MCF 10A (cell line): ENCODE measurements at regions of chr18 and their contacts with region 1.

Region 1: GRCh38 chr18:55234366-55235093 is 275.3 kb upstream of the CCDC68 start:
- DNase-seq: peak; percentile 82
- H3K4me3 Mint-ChIP-seq: peak overlapping the region; percentile 59
- H3K27ac Mint-ChIP-seq: no peak overlapping the region
- H3K4me1 Mint-ChIP-seq: peaks cover 5% of the 10 kb centered on the region
- H3K27me3 Mint-ChIP-seq: no peaks in the 10 kb centered on the region
- CTCF ChIP-seq: peak; percentile 78

Region 2: GRCh38 chr18:54616220-54616848 is 618.2 kb before region 1 on chr18:
- CTCF ChIA-PET with region 1: no interaction called
- POLR2A ChIA-PET with region 1: no interaction called
- intact Hi-C with region 1: no loop called
- DNase-seq: no peak
- H3K4me3 Mint-ChIP-seq: no peak overlapping the region
- H3K27ac Mint-ChIP-seq: no peak overlapping the region
- H3K4me1 Mint-ChIP-seq: peaks cover 11% of the 10 kb centered on the region
- H3K27me3 Mint-ChIP-seq: no peaks in the 10 kb centered on the region
- CTCF ChIP-seq: no peak

Region 3: GRCh38 chr18:55219059-55219458 is 15.5 kb before region 1 on chr18:
- CTCF ChIA-PET with region 1: interaction called, 19 read pairs
- POLR2A ChIA-PET with region 1: no interaction called
- intact Hi-C with region 1: no loop called
- DNase-seq: no peak
- H3K4me3 Mint-ChIP-seq: no peak overlapping the region
- H3K27ac Mint-ChIP-seq: no peak overlapping the region
- H3K4me1 Mint-ChIP-seq: no peaks in the 10 kb centered on the region
- H3K27me3 Mint-ChIP-seq: no peaks in the 10 kb centered on the region
- CTCF ChIP-seq: no peak

Region 4: GRCh38 chr18:55249550-55249949 is 15.0 kb after region 1 on chr18:
- CTCF ChIA-PET with region 1: interaction called, 40 read pairs
- POLR2A ChIA-PET with region 1: no interaction called
- intact Hi-C with region 1: no loop called
- DNase-seq: no peak
- H3K4me3 Mint-ChIP-seq: no peak overlapping the region
- H3K27ac Mint-ChIP-seq: no peak overlapping the region
- H3K4me1 Mint-ChIP-seq: peaks cover 6% of the 10 kb centered on the region
- H3K27me3 Mint-ChIP-seq: no peaks in the 10 kb centered on the region
- CTCF ChIP-seq: no peak

Region 5: DNA sequence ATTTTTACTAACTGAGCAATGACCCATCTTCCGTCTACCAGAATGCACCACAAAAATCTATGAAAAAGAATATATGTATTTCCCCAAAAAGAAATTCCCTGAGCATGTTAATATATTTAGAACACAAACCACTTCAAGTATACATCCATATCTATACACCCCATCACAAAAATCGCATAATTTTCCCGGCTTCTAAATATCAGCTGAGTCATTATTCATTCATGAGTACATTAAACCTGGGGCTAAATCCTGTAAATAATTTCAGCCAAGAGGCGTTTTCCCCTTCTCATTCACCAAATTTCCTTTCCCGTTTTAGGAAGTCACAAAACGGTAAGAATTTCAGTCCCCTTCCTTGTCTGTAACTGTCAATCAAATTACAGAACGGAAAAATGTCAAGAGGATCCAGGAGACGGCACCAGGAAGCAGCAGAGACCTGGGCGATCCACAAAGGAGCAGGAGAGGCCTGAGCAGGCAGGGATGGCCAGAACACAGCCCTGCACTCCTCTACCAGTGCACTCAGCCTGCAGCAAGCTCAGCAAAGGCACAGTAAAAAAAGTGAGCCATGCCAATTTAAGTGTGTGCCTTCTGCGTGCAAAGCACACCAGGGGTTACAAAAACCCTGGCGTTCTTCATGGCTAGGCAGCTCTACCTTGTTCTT is 52.7 kb after region 1 on chr18:
- CTCF ChIA-PET with region 1: interaction called, 13 read pairs
- POLR2A ChIA-PET with region 1: no interaction called
- intact Hi-C with region 1: no loop called
- DNase-seq: no peak
- H3K4me3 Mint-ChIP-seq: no peak overlapping the region
- H3K27ac Mint-ChIP-seq: no peak overlapping the region
- H3K4me1 Mint-ChIP-seq: no peaks in the 10 kb centered on the region
- H3K27me3 Mint-ChIP-seq: no peaks in the 10 kb centered on the region
- CTCF ChIP-seq: no peak

Region 6: GRCh38 chr18:55343396-55344073 is 109.0 kb after region 1 on chr18:
- CTCF ChIA-PET with region 1: interaction called, 12 read pairs
- POLR2A ChIA-PET with region 1: no interaction called
- intact Hi-C with region 1: no loop called
- DNase-seq: peak; percentile 25
- H3K4me3 Mint-ChIP-seq: no peak overlapping the region
- H3K27ac Mint-ChIP-seq: no peak overlapping the region
- H3K4me1 Mint-ChIP-seq: no peaks in the 10 kb centered on the region
- H3K27me3 Mint-ChIP-seq: no peaks in the 10 kb centered on the region
- CTCF ChIP-seq: peak; percentile 57

Region 7: GRCh38 chr18:55589625-55590291 is 355.2 kb after region 1 on chr18:
- CTCF ChIA-PET with region 1: interaction called, 4 read pairs
- POLR2A ChIA-PET with region 1: no interaction called
- intact Hi-C with region 1: loop called (anchors 5 kb)
- DNase-seq: peak; percentile 94
- H3K4me3 Mint-ChIP-seq: peak overlapping the region; percentile 88
- H3K27ac Mint-ChIP-seq: peak overlapping the region; percentile 96
- H3K4me1 Mint-ChIP-seq: peaks cover 17% of the 10 kb centered on the region
- H3K27me3 Mint-ChIP-seq: no peaks in the 10 kb centered on the region
- CTCF ChIP-seq: no peak

Region 8: GRCh38 chr18:56575819-56576663 is 1341.5 kb after region 1 on chr18:
- CTCF ChIA-PET with region 1: interaction called, 80 read pairs
- POLR2A ChIA-PET with region 1: no interaction called
- intact Hi-C with region 1: loop called (anchors 1 kb)
- DNase-seq: peak; percentile 68
- H3K4me3 Mint-ChIP-seq: no peak overlapping the region
- H3K27ac Mint-ChIP-seq: no peak overlapping the region
- H3K4me1 Mint-ChIP-seq: no peaks in the 10 kb centered on the region
- H3K27me3 Mint-ChIP-seq: no peaks in the 10 kb centered on the region
- CTCF ChIP-seq: peak; percentile 60